ENCODE measurements at regions of chr20 and their contacts with region 1.

Region 1: DNA sequence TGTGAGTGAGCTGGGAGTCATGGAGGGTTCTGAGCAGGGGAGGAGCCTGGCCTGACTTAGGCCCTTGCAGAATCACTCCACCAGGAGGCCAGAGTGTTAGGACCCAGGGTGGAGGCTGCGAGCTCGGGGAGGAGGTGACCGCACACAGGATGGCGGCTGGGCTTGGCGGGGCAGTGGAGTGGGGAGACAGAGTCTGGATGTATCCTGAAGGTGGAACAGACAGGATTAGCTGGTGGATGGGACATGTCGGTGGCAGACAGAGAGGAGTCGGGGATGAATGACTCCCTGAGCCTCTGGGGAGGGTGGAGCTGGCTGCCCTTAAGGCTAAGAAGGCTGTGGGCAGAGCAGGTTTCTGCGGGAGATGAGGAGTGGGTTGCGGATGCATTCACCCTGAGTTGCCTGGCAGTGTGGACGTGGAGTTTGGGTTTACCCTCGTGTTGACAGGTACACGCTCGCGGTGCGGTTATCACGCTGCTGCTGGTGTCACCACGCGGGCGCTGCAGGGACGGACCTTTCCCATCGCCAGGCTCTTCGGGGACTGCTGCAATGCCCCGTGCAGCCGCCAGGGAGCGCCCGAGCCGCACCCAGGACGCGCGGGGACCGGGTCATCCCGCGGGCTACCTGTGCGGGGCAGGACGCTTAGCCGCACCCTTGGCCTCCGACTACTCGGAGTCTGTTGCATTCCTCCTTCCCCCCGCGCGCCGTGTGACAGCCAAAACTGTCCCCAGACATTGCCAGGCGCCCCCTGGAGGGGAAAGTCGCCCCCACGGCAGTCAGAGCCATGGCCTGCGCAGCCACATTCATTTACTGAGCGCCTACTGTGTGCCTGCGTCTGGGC is 43.0 kb upstream of the PTGIS start:
- DNase-seq: peak; percentile 54
- H3K4me3 ChIP-seq: peak overlapping the region; percentile 9 to 34 (median 19)
- H3K27ac ChIP-seq: no peak overlapping the region
- H3K4me1 ChIP-seq: peaks cover 5% of the 10 kb centered on the region
- H3K27me3 ChIP-seq: no peaks in the 10 kb centered on the region
- CTCF ChIP-seq: peak; percentile 94 to 99

Region 2: DNA sequence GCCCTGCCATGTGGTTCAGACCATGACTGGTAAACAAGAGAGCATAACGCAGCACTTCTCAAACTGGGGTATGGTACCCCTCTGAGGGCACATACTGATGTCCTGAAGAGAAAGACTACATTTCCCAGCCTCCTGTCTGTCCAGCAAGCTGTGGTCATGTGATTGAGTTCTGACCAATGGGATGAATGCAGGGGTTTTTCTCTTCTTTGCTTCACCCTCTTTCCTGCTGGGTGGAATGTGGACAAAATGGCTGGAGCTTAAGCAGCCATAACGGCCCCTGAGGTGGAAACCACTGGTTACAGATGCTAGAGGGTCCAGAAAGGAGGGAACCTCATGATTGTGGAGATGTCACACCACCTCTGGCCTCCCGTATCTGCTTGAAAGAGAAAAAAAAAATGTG is 109.0 kb before region 1 on chr20:
- CTCF ChIA-PET with region 1: no interaction called
- dilution Hi-C with region 1: no loop called
- in situ Hi-C with region 1: no loop called
- intact Hi-C with region 1: no loop called
- DNase-seq: peak; percentile 12
- H3K4me3 ChIP-seq: no peak overlapping the region
- H3K27ac ChIP-seq: no peak overlapping the region
- H3K4me1 ChIP-seq: no peaks in the 10 kb centered on the region
- H3K27me3 ChIP-seq: peaks cover under 1% of the 10 kb centered on the region
- CTCF ChIP-seq: no peak

Region 3: GRCh38 chr20:49541733-49542513 is 69.0 kb before region 1 on chr20:
- CTCF ChIA-PET with region 1: interaction called, 11 read pairs
- dilution Hi-C with region 1: no loop called
- in situ Hi-C with region 1: loop called in 1 of 2 experiments (anchors 5 kb)
- intact Hi-C with region 1: loop called (anchors 1 kb)
- DNase-seq: peak; percentile 38
- H3K4me3 ChIP-seq: no peak overlapping the region
- H3K27ac ChIP-seq: no peak overlapping the region
- H3K4me1 ChIP-seq: no peaks in the 10 kb centered on the region
- H3K27me3 ChIP-seq: no peaks in the 10 kb centered on the region
- CTCF ChIP-seq: peak; percentile 80 to 82

Region 4: DNA sequence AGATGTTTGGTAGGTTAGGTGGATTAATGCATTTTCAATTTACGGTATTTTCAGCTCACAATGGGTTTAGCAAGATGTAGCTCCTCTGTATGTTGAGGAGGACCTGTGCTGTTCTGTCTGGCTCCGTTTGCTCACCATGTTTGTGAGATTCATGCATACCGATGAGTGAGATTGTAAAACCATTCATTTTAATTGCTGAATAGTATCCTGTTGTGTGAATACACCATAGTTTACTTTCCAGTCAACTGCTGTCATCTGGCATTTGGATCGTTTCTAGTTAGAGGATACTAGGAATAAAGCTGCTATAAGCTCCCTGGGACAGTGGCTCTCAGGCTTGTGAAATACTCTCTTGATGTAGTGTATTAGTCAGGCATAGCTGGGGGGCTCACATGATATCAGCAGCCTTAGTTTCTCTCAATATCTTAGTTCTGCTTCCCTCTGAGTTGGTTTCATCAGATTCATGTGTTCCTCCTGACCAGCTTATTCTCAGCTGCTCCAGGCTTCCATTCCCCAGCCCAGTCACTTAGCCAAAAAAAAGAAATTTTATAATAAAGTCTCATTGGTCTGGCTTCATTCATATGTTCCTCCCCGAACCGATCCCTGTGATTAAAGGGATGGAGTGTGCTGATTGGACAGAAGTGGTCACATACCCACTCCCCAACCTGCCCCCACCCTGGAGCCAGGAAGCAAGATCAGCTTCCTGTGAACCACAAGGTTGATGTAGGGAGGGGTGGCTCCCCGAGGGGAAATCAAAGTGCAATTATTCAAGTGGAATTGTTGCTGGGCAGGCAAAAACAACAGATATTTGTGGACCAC is 113.7 kb after region 1 on chr20:
- CTCF ChIA-PET with region 1: no interaction called
- dilution Hi-C with region 1: no loop called
- in situ Hi-C with region 1: no loop called
- intact Hi-C with region 1: loop called (anchors 1 kb)
- DNase-seq: peak; percentile 14
- H3K4me3 ChIP-seq: no peak overlapping the region
- H3K27ac ChIP-seq: no peak overlapping the region
- H3K4me1 ChIP-seq: no peaks in the 10 kb centered on the region
- H3K27me3 ChIP-seq: no peaks in the 10 kb centered on the region
- CTCF ChIP-seq: no peak

Region 5: DNA sequence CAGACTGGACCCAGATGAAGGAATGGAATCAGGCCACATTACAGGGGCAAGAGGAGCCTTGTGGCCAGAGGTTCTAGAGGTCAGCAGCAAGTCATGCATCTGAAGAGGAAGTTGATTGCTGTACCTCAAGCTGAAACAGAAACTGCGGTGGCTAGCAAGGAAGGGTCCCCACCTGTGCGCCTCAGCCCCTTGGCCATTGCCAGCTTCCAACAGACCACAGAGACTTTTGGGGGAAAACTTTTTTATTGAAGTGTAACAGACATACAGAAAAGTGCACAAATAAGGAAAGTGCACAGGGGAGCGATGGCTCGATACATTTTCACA is 174.9 kb after region 1 on chr20:
- CTCF ChIA-PET with region 1: no interaction called
- dilution Hi-C with region 1: no loop called
- in situ Hi-C with region 1: no loop called
- intact Hi-C with region 1: loop called (anchors 1 kb)
- DNase-seq: no peak
- H3K4me3 ChIP-seq: no peak overlapping the region
- H3K27ac ChIP-seq: no peak overlapping the region
- H3K4me1 ChIP-seq: no peaks in the 10 kb centered on the region
- H3K27me3 ChIP-seq: no peaks in the 10 kb centered on the region
- CTCF ChIP-seq: no peak

Region 6: DNA sequence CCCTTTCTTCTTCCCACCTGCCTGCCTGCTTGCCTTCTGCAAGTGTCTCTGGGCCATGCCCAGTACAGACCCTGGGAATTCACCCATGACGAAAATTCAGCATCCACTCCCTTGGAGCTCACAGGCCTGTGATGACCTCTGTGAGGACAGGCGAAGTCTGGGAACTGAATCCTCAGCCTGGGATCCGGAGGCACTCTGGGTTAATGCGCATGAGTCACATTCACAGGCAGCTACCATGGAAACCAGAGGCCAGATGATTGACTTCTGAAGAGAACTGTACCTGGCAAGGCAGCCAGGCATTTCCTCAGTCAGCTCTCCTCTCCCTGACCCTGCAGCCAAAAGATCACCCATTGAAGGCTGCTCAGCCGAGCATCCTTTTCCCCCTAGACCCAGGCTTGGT is 242.7 kb after region 1 on chr20:
- CTCF ChIA-PET with region 1: interaction called, 3 read pairs
- dilution Hi-C with region 1: no loop called
- in situ Hi-C with region 1: loop called (anchors 5 to 25 kb)
- intact Hi-C with region 1: no loop called
- DNase-seq: peak; percentile 76
- H3K4me3 ChIP-seq: no peak overlapping the region
- H3K27ac ChIP-seq: no peak overlapping the region
- H3K4me1 ChIP-seq: peaks cover 21% of the 10 kb centered on the region
- H3K27me3 ChIP-seq: no peaks in the 10 kb centered on the region
- CTCF ChIP-seq: no peak

Region 7: GRCh38 chr20:49928401-49929141 is 317.7 kb after region 1 on chr20:
- CTCF ChIA-PET with region 1: no interaction called
- dilution Hi-C with region 1: no loop called
- in situ Hi-C with region 1: no loop called
- intact Hi-C with region 1: loop called (anchors 1 kb)
- DNase-seq: peak; percentile 79
- H3K4me3 ChIP-seq: no peak overlapping the region
- H3K27ac ChIP-seq: no peak overlapping the region
- H3K4me1 ChIP-seq: peaks cover 6% of the 10 kb centered on the region
- H3K27me3 ChIP-seq: no peaks in the 10 kb centered on the region
- CTCF ChIP-seq: peak; percentile 90